AG04449 (cell line): ENCODE measurements at regions of chr10 and their contacts with region 1.

Region 1: DNA sequence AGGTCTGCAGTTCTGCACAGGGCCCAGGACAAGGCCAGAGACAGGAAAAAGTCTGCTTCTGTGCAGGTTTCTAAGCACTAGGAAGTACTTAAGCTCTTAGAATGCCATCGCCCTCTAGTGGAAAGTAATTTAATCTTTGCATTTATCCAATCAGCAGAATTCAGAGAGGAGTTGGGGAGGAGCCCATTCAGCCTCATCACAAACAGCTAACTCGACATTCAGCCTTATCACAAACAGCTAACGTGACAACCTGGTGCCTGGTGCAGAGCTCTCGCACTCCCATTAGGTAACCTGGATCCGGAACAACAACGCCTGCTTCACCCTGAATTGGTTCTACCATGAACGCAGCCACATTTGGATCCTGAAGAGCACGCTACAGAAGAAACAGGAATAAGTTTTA is 15.2 kb downstream of the OAT start:
- DNase-seq: peak; percentile 36
- H3K4me3 ChIP-seq: no peak overlapping the region
- CTCF ChIP-seq: peak; percentile 50

Region 2: GRCh38 chr10:124323111-124323886 is 80.2 kb before region 1 on chr10:
- CTCF ChIA-PET with region 1: no interaction called
- POLR2A ChIA-PET with region 1: no interaction called
- DNase-seq: no peak
- H3K4me3 ChIP-seq: no peak overlapping the region
- CTCF ChIP-seq: no peak

Region 3: DNA sequence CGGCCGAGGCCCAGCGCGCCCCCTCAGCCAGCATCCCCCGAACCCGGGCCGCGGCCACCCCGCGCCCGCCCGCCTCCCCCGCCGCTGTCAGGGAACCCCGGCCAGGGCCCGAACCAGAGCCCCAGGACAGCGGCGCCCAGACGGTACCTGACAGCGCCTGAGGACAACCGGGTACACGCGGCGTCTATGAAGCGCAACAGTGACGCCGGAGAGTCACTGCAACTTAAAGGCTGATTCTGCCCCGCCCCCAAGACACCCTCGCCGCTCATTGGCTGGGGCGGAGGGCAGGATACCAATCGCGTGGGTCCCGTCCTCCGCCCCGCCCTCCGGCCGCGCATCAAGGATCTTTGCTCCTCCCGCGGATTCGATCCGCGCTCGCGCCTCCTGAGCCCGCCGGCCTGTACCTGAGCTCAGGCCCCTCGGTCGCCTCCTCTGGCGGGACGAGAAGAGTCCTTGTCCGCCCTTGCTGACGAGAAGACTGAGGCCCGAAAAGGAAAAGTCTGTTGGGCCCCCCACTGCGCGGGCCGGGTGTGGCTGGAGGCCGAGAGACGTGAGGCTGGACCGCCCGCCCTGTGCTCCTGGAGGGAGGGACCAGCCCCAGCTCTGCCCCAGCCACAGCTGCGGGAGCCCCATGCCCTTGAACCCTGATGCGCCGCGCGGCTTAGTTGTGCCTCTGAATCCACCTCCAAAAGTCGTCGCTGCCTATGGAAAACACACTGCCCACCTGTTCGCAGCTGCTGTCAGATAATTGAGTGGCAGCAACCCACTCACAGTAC is 15.4 kb after region 1 on chr10 and contains the start of gene OAT:
- CTCF ChIA-PET with region 1: interaction called, 32 read pairs
- POLR2A ChIA-PET with region 1: interaction called, 8 read pairs
- DNase-seq: peak; percentile 65
- H3K4me3 ChIP-seq: peak within 1 kb of the TSS; percentile 76
- CTCF ChIP-seq: peak; percentile 40